ENCODE measurements at regions of chr2 and their contacts with region 1.

Region 1: DNA sequence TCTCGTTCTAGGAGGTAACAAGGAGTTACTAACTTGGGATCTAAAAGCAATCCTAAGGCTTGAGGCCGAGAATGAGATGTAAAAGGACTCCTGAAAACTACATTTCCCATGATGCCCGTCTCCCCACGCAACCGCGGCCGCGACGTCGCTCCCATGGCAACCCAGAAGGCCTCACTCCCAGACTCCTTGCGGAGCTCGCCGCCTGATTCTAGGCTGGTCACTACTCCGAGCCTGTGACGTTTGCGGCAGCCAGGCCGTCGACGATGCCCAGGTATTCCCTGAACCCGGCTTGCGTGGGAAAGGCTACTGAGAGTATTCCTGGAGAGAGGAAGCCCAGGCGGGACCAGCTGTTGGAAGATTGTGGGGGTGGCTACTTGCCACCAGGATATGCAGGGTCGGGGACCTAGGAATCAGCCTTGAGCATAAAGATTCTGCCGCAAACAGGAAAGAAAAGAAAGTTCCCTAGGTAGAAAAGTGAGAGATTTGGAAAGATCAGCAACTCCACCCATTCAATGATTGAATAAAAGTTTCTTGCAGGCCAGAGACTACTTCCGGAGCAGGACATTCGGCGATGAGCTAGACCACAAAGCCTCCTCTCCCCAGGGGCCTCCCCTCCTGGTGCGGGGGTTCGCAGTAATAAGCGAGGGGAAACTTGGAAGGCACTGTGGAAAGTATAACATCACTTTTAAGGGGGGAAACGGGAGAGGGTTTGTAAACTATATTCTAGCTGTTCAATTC is at the start of gene DYNC2LI1:
- DNase-seq: peak; percentile 80
- ATAC-seq: peak; percentile 100
- H3K4me3 ChIP-seq: peak within 1 kb of the TSS; percentile 85 to 87
- H3K27ac ChIP-seq: peak within 1 kb of the TSS; percentile 89
- H3K4me1 ChIP-seq: peaks cover 4% of the 10 kb centered on the region; the same call in 1 of the 2 replicates
- H3K27me3 ChIP-seq: no peaks in the 10 kb centered on the region
- CTCF ChIP-seq: no peak
- total RNA-seq, gene DYNC2LI1: 8.5 TPM

Region 2: DNA sequence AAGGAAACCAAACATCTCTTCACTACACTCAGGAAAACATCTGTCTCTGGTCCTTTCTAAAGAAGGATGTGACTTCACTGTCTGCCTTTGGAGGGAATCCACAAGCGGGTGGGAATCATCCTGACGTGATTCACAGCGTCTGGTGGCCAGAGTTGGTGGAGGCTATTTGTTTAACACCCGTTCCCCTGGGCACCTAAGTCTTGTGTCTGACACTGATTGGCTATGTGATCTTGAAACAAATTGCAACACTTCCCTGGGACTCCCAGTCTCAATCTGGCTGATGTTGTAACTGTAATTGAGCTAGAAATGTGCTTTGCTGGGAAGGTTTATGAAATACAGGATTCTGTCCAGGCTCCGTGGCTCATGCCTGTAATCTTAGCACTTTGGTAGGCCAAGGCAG is 1138.6 kb after region 1 on chr2:
- CTCF ChIA-PET with region 1: interaction called, 16 read pairs
- POLR2A ChIA-PET with region 1: no interaction called
- in situ Hi-C with region 1: no loop called
- intact Hi-C with region 1: no loop called
- DNase-seq: no peak
- ATAC-seq: no peak
- H3K4me3 ChIP-seq: no peak overlapping the region
- H3K27ac ChIP-seq: no peak overlapping the region
- H3K4me1 ChIP-seq: no peaks in the 10 kb centered on the region
- H3K27me3 ChIP-seq: 0 out of 2 replicates have a peak, but pooled peaks cover 2% of the 10 kb centered on the region
- CTCF ChIP-seq: no peak

Measured in Panc1 (cell line).